Natural killer cell (primary cell): ENCODE measurements at regions of chrX and their contacts with region 1.

Region 1: DNA sequence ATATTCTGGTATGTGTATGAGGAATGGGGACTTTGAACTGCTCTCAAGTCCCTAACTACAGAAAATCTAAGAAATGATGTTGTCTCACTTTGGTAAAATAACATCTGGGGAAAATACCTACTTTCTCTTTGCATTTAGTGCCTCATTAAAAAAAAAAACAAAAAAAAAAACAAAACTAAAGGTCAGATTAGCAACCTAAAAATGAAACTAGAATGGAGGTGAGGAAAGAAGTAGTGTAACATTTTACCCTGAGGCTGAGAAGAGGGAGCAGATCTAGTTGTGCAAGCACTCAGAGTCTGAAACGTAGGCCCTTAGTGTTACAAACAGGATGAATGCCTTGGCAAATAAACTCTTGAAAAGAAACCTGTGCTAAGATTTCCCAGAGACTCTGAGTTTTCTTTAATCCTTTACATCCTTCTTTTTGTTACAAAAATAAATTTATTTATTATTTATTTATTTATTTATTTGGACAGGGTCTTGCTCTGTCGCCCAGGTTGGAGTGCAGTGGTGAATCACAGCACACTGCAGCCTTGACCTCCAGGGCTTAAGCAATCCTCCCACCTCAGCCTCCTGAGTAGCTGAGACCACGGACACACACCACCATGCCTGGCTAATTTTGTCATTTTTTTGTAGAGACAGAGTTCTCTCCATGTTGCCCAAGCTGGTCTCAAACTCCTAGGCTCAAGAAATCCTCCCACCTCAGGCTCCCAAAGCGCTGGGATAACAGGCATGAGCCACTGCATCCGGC is 56.2 kb downstream of the VGLL1 start:
- DNase-seq: peak in 1 of 2 donors; percentile 64
- ATAC-seq: peak; percentile 64 to 77 (median 68)
- H3K4me3 ChIP-seq: no peak overlapping the region
- H3K4me3 Mint-ChIP-seq: peak overlapping the region; percentile 54
- H3K27ac ChIP-seq: peak overlapping the region; percentile 88
- H3K27ac Mint-ChIP-seq: peak overlapping the region; percentile 88
- H3K4me1 ChIP-seq: peaks cover 37% of the 10 kb centered on the region
- H3K4me1 Mint-ChIP-seq: peaks cover 37 to 38% of the 10 kb centered on the region in 2 donors
- H3K27me3 ChIP-seq: no peaks in the 10 kb centered on the region
- H3K27me3 Mint-ChIP-seq: no peaks in the 10 kb centered on the region
- CTCF ChIP-seq: no peak

Region 2: DNA sequence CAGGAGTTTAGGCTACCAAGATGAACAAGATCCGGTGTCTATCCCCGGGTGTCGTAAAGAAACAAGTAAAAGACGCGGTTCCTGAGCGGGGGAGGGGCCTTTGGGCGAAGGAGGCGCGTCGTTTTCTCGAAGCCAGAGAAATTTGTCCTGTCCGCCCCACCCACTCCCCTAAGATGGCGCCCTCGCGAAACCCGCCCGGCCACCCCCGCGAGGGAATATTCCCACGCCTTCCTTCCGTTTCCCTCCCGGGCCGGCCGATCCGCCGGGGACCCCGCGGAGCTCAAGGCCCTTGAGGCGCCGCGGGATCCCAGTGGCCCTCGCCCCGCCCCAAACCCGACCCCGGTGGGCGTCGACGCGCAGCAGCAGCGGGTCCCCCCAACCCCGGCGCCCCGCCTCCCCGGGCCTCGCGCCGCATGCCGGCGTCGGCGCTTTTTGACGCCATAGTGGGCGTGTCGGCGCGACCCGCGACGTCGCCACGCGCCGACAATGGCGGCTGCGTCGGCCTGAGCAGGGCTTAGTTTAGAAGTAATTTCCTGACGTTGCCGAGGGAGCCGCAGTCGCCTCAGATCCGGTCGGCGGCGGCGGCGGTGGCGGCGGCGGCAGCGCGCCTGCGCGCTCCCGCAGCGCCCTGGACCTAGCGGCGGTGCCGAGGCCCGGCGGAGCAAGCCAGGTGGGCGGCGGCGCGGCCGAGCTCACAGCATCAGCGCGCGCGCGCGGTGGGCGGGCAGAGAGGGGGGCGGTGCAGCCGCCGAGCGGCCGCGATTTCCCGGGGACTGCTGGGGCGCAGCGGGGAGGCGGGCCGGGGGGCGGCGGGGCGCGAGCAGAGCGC is 91.2 kb before region 1 on chrX and contains the start of gene HTATSF1:
- intact Hi-C with region 1: loop called (anchors 2 kb)
- DNase-seq: peak; percentile 78 to 93
- ATAC-seq: peak; percentile 79 to 92 (median 81)
- H3K4me3 ChIP-seq: peak within 1 kb of the TSS; percentile 84
- H3K4me3 Mint-ChIP-seq: peak within 1 kb of the TSS; percentile 89
- H3K27ac ChIP-seq: peak within 1 kb of the TSS; percentile 96
- H3K27ac Mint-ChIP-seq: peak within 1 kb of the TSS; percentile 93
- H3K4me1 ChIP-seq: peaks cover 5% of the 10 kb centered on the region
- H3K4me1 Mint-ChIP-seq: peaks cover 12 to 16% of the 10 kb centered on the region in 2 donors
- H3K27me3 ChIP-seq: no peaks in the 10 kb centered on the region
- H3K27me3 Mint-ChIP-seq: peaks cover 5 to 10% of the 10 kb centered on the region in 2 donors
- CTCF ChIP-seq: no peak
- total RNA-seq, gene HTATSF1: 26.4 to 30.4 (median 28.2) TPM

Region 3: DNA sequence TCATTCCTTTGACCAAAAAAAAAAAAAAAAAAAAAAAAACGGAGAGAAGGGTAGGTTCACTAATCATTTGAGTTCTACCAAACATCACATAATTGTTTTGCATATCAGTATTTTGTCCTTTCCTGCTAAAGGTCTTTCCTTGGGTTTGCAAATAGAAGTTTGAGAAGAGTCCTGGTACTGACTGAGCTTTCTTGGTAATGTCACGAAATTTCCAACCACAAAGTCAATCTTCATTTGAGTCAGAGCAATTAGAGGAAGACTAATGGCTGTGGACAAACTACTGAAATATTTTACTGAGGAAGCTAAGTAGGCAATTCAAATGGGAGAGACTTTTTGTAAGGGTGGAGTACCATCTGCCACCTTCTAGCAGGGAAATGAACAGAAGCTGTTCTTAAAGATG is 38.0 kb after region 1 on chrX:
- intact Hi-C with region 1: loop called (anchors 5 kb)
- DNase-seq: no peak
- ATAC-seq: no peak
- H3K4me3 ChIP-seq: no peak overlapping the region
- H3K4me3 Mint-ChIP-seq: peak overlapping the region; percentile 75
- H3K27ac ChIP-seq: no peak overlapping the region
- H3K27ac Mint-ChIP-seq: no peak overlapping the region
- H3K4me1 ChIP-seq: peaks cover 52% of the 10 kb centered on the region
- H3K4me1 Mint-ChIP-seq: peaks cover 68 to 70% of the 10 kb centered on the region in 2 donors
- H3K27me3 ChIP-seq: no peaks in the 10 kb centered on the region
- H3K27me3 Mint-ChIP-seq: no peaks in the 10 kb centered on the region
- CTCF ChIP-seq: no peak